HepG2 (cell line): ENCODE measurements at regions of chr12 and their contacts with region 1.

Region 1: GRCh38 chr12:15505616-15506015 is 183.3 kb downstream of the PTPRO start:
- DNase-seq: no peak
- ATAC-seq: no peak
- H3K4me3 ChIP-seq: no peak overlapping the region
- H3K27ac ChIP-seq: no peak overlapping the region
- H3K4me1 ChIP-seq: no peaks in the 10 kb centered on the region
- H3K27me3 ChIP-seq: peaks cover 0 to 9% of the 10 kb centered on the region in 2 experiments; a peak in 2 of 5 replicates
- CTCF ChIP-seq: no peak
- EP300 ChIP-seq: no peak
- POLR2A ChIP-seq: no peak
- RAD21 ChIP-seq: no peak

Region 2: DNA sequence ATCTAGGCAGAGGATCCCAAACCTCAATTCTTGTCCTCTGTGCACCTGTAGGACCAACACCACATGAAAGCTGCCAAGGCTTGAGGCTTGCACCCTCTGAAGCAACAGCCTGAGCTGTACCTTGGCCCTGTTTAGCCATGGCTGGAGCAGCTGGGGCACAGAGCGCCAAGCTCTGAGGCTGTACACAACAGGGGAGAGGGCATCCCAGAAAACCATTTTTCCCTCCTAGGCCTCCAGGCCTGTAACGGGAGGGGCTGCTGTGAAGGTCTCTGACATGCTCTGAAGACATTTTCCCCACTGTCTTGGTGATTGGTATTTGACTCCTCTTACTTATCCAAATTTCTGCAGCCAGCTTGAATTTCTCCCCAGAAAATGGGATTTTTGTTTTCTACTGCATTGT is 205.7 kb before region 1 on chr12:
- CTCF ChIA-PET with region 1: no interaction called
- POLR2A ChIA-PET with region 1: no interaction called
- in situ Hi-C with region 1: no loop called
- intact Hi-C with region 1: loop called (anchors 5 kb)
- DNase-seq: no peak
- ATAC-seq: no peak
- H3K4me3 ChIP-seq: no peak overlapping the region
- H3K27ac ChIP-seq: no peak overlapping the region
- H3K4me1 ChIP-seq: no peaks in the 10 kb centered on the region
- H3K27me3 ChIP-seq: no peaks in the 10 kb centered on the region
- CTCF ChIP-seq: no peak
- EP300 ChIP-seq: no peak
- POLR2A ChIP-seq: no peak
- RAD21 ChIP-seq: no peak

Region 3: DNA sequence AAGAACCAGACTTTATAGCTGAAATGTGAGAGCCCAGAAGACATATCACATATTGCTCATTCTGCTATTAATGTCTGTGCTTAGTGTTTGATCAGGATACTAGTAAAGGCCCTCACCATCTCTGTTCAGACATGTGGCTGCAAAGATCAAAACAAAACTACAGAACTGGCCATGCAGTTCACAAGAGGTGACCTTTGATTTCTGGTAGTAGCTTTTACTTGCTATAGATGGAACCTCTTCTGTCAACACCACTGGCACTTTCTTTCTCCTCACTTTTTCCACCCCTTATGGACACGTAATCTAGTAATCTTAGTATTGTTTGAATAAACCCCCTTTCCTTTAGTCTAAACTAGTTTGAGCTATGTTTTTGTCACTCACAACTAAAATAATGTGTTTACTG is 68.7 kb after region 1 on chr12:
- CTCF ChIA-PET with region 1: no interaction called
- POLR2A ChIA-PET with region 1: no interaction called
- in situ Hi-C with region 1: no loop called
- intact Hi-C with region 1: no loop called
- DNase-seq: peak; percentile 20
- ATAC-seq: peak; percentile 66
- H3K4me3 ChIP-seq: no peak overlapping the region
- H3K27ac ChIP-seq: no peak overlapping the region
- H3K4me1 ChIP-seq: peaks cover 31% of the 10 kb centered on the region
- H3K27me3 ChIP-seq: no peaks in the 10 kb centered on the region; a peak in 1 of 5 replicates
- CTCF ChIP-seq: no peak
- EP300 ChIP-seq: no peak; a peak in 1 of 4 replicates
- POLR2A ChIP-seq: no peak
- RAD21 ChIP-seq: no peak